Transverse colon (tissue), 4 donors: ENCODE measurements at regions of chr4 and their contacts with region 1.

Region 1: GRCh38 chr4:32196928-32197688 is 1476.9 kb downstream of the PCDH7 start:
- DNase-seq: no peak
- H3K4me3 ChIP-seq: no peak overlapping the region
- H3K27ac ChIP-seq: no peak overlapping the region
- H3K4me1 ChIP-seq: no peaks in the 10 kb centered on the region
- H3K27me3 ChIP-seq: no peaks in the 10 kb centered on the region
- CTCF ChIP-seq: no peak
- EP300 ChIP-seq: no peak
- POLR2A ChIP-seq: no peak

Region 2: GRCh38 chr4:32073542-32073941 is 123.6 kb before region 1 on chr4:
- in situ Hi-C with region 1: no loop called
- intact Hi-C with region 1: no loop called
- DNase-seq: no peak
- H3K4me3 ChIP-seq: no peak overlapping the region
- H3K27ac ChIP-seq: no peak overlapping the region
- H3K4me1 ChIP-seq: no peaks in the 10 kb centered on the region
- H3K27me3 ChIP-seq: no peaks in the 10 kb centered on the region
- CTCF ChIP-seq: no peak
- EP300 ChIP-seq: no peak
- POLR2A ChIP-seq: no peak

Region 3: DNA sequence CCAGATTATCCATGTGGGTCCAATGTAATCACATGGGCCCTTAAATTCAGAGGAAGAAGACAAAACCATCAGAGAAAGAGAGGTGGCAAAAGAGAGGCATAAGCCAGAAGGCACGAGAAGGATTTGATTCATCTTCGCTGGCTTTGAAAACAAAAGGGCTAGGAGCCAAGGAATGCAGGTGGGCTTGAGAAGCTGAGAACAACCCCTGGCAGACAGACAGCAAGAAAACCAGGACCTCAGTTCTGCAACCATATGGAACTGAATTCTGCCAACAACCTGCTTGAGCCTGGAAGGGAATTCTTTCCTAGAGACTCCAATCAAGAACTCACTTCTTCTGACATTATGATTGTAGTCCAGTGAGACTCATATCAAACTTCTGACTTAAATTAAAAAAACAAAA is 54.8 kb after region 1 on chr4:
- in situ Hi-C with region 1: no loop called
- intact Hi-C with region 1: loop called (anchors 2 kb)
- DNase-seq: no peak
- H3K4me3 ChIP-seq: no peak overlapping the region
- H3K27ac ChIP-seq: no peak overlapping the region
- H3K4me1 ChIP-seq: no peaks in the 10 kb centered on the region
- H3K27me3 ChIP-seq: no peaks in the 10 kb centered on the region
- CTCF ChIP-seq: no peak
- EP300 ChIP-seq: no peak
- POLR2A ChIP-seq: no peak

Region 4: DNA sequence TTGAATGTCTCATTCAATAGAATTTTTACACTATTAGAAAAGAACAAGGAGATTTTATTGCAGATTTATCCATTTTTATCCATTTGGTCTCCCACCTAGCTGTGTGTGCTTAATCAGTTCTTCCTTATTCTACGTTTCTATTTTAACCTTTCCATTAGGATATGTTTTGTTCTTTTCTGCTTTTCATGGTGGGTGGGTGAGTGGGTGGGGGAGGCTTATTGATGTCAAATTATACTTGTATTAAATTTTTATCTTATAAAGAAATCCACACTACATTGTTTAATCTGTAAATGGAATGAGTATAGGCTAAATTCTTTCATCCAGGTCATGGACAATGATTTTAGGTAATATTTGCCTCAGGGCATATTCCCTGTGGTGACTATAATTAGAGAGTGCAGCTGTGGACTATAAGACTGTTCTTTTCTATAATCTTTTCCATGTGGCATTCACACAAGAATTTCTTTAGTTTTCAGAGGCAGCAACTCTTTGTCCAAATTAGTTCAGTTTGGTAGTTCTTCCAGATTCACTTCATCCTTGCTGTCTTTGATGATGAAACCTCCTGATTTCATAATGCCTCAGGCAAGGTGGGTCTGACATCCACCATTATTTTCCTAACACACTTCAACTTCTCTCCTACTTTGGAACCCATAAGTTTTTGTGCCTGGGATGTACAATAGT is 974.9 kb after region 1 on chr4:
- in situ Hi-C with region 1: no loop called
- intact Hi-C with region 1: no loop called
- DNase-seq: no peak
- H3K4me3 ChIP-seq: no peak overlapping the region
- H3K27ac ChIP-seq: no peak overlapping the region
- H3K4me1 ChIP-seq: no peaks in the 10 kb centered on the region
- H3K27me3 ChIP-seq: no peaks in the 10 kb centered on the region
- CTCF ChIP-seq: no peak
- EP300 ChIP-seq: no peak
- POLR2A ChIP-seq: no peak